Colonic mucosa (tissue), 4 donors: ENCODE measurements at regions of chr1 and their contacts with region 1.

Region 1: GRCh38 chr1:168603501-168604110 is 27.2 kb downstream of the XCL1 start:
- DNase-seq: peak; percentile 82
- H3K4me3 ChIP-seq: no peak overlapping the region
- H3K27ac ChIP-seq: no peak overlapping the region
- H3K4me1 ChIP-seq: no peaks in the 10 kb centered on the region
- H3K27me3 ChIP-seq: no peaks in the 10 kb centered on the region
- CTCF ChIP-seq: peak; percentile 78

Region 2: DNA sequence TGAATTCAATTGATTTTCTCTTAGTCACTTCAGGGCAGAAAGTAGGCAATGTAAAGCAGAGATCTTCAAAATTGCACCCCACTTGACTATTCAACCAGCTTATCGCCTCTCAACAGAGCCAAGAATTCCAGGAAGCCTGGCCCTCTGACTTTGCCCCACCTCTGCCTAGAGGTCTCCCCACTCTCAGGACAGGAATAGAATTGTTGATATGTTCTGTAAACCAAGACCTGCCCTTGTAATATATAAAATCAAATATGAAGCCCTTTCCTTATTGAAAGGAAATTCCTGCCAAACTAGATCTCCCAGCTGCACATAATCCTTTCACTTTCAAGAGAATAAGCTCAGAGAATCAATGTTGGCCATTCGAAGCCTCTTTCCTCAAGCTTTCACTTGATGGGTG is 241.5 kb after region 1 on chr1:
- intact Hi-C with region 1: no loop called
- DNase-seq: peak; percentile 45
- H3K4me3 ChIP-seq: no peak overlapping the region
- H3K27ac ChIP-seq: peak overlapping the region; percentile 57
- H3K4me1 ChIP-seq: no peaks in the 10 kb centered on the region
- H3K27me3 ChIP-seq: no peaks in the 10 kb centered on the region
- CTCF ChIP-seq: no peak

Region 3: GRCh38 chr1:169348383-169349036 is 744.9 kb after region 1 on chr1:
- intact Hi-C with region 1: loop called (anchors 2 kb)
- DNase-seq: peak; percentile 41
- H3K4me3 ChIP-seq: no peak overlapping the region
- H3K27ac ChIP-seq: no peak overlapping the region
- H3K4me1 ChIP-seq: no peaks in the 10 kb centered on the region
- H3K27me3 ChIP-seq: no peaks in the 10 kb centered on the region
- CTCF ChIP-seq: peak; percentile 73